ENCODE measurements at regions of chr7 and their contacts with region 1.

Region 1: DNA sequence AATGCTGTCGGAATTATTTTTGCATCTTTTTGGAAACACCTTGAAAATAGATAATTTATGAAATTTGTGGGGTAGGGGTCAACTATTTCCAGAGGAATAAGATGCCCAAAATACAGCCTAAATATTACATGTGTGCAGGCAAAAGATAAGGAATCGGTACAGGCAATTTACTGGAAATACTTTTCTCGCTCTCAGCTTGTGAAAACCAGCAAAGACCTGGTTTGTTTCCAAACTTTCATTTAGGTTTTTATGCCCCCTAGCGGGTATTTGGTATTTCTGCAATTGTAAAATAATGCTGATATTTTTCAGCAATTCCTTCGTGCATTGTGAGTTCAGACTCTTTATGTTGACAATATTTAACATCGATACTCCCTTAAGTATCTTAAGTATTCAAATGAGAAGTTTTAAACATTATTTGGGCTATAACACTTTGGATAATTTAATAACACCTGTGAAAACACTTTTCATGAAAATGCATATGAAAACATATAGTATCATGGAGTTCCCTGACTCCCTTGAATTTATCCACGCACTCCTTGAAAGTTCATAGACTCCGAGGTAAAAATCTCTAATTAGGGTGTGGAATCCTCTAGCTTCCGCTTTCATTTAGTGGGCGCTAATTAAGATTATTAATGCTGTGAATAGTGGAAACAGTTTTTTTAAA is 132.4 kb downstream of the TSPAN12 start:
- DNase-seq: no peak

Region 2: DNA sequence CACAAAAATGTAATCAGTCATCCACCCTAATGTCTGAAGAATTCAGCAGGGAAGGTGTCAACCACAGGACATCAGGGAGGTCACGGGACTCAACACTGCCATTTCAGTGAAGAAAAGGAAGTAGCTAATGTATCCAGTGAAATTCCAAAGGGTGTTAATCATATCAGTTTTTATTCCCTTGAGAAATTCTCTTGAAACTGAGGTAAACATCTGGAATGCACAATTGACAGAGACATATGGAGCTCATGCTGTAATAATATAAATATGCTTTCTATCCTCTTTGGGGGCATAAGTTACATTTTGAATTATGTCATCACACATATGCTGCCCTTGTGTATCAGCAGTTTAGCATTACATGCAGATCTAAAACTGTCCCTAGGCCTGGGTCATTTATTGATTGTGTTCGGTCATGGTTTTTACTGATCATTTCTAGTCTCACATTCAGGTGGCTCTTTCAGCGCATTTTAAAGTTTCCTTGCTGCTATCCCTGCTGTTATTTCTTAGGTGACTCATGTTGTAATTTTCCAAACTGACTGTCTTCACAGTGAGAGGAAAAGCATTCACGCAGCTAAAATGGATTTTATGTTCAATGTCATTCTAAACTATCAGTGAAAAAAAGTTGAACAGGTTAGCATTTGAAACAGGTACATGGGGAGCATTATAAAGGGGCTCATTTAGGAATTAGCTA is 141.5 kb before region 1 on chr7:
- intact Hi-C with region 1: loop called (anchors 10 kb)
- DNase-seq: no peak